Activated B cell treated with CpG ODN at 0.5 μM for 24 hours (primary cell): ENCODE measurements at regions of chr6 and their contacts with region 1.

Region 1: GRCh38 chr6:29705389-29706231 is 17.6 kb upstream of the HLA-F start:
- DNase-seq: no peak
- ATAC-seq: no peak
- H3K4me3 Mint-ChIP-seq: no peak overlapping the region
- H3K27ac Mint-ChIP-seq: no peak overlapping the region
- H3K4me1 Mint-ChIP-seq: peaks cover 17% of the 10 kb centered on the region
- H3K27me3 Mint-ChIP-seq: peaks cover 26% of the 10 kb centered on the region
- CTCF ChIP-seq: no peak

Region 2: DNA sequence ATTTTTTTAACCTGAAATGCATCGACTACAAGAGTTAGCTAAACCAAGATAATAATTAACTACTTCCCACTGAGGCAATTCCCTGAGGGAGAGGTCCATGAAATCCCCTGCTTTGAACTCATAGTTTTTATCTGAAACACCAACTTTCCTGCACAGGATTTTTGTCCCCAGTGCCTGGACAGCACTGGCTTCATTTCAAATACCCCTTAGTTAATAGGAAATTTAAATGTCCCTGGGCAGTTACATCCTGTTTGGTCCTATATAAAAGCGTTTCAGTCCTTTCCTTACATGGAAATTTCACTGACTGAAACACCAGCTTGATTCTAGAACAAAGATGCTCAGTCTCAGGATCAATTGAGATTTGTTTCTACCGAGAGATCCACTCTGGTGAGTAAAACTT is 404.2 kb before region 1 on chr6 and contains the start of gene OR14J1:
- CTCF ChIA-PET with region 1: no interaction called
- POLR2A ChIA-PET with region 1: no interaction called
- intact Hi-C with region 1: no loop called
- DNase-seq: no peak
- ATAC-seq: no peak
- H3K4me3 Mint-ChIP-seq: no peak within 1 kb of the TSS
- H3K27ac Mint-ChIP-seq: no peak within 1 kb of the TSS
- H3K4me1 Mint-ChIP-seq: no peaks in the 10 kb centered on the region
- H3K27me3 Mint-ChIP-seq: peaks cover 6% of the 10 kb centered on the region
- CTCF ChIP-seq: no peak
- total RNA-seq, gene OR14J1: not detected in 2 replicates

Region 3: GRCh38 chr6:29723262-29723665 is 17.7 kb after region 1 on chr6 and contains the start of gene HLA-F:
- CTCF ChIA-PET with region 1: no interaction called
- POLR2A ChIA-PET with region 1: interaction called, 10 read pairs
- intact Hi-C with region 1: no loop called
- DNase-seq: peak; percentile 76
- ATAC-seq: peak; percentile 89
- H3K4me3 Mint-ChIP-seq: peak within 1 kb of the TSS; percentile 94
- H3K27ac Mint-ChIP-seq: peak within 1 kb of the TSS; percentile 98
- H3K4me1 Mint-ChIP-seq: peaks cover 61% of the 10 kb centered on the region
- H3K27me3 Mint-ChIP-seq: no peaks in the 10 kb centered on the region
- CTCF ChIP-seq: no peak
- total RNA-seq, gene HLA-F: 726 and 736 TPM in 2 replicates

Region 4: GRCh38 chr6:29834564-29835436 is 129.2 kb after region 1 on chr6:
- CTCF ChIA-PET with region 1: interaction called, 17 read pairs
- POLR2A ChIA-PET with region 1: no interaction called
- intact Hi-C with region 1: loop called (anchors 1 kb)
- DNase-seq: peak; percentile 45
- ATAC-seq: peak; percentile 40
- H3K4me3 Mint-ChIP-seq: no peak overlapping the region
- H3K27ac Mint-ChIP-seq: no peak overlapping the region
- H3K4me1 Mint-ChIP-seq: no peaks in the 10 kb centered on the region
- H3K27me3 Mint-ChIP-seq: peaks cover 67% of the 10 kb centered on the region
- CTCF ChIP-seq: no peak

Region 5: GRCh38 chr6:30707281-30707872 is 1001.8 kb after region 1 on chr6:
- CTCF ChIA-PET with region 1: no interaction called
- POLR2A ChIA-PET with region 1: no interaction called
- intact Hi-C with region 1: no loop called
- DNase-seq: no peak
- ATAC-seq: no peak
- H3K4me3 Mint-ChIP-seq: no peak overlapping the region
- H3K27ac Mint-ChIP-seq: no peak overlapping the region
- H3K4me1 Mint-ChIP-seq: peaks cover 7% of the 10 kb centered on the region
- H3K27me3 Mint-ChIP-seq: no peaks in the 10 kb centered on the region
- CTCF ChIP-seq: no peak